WTC11 (cell line): ENCODE measurements at regions of chr2 and their contacts with region 1.

Region 1: DNA sequence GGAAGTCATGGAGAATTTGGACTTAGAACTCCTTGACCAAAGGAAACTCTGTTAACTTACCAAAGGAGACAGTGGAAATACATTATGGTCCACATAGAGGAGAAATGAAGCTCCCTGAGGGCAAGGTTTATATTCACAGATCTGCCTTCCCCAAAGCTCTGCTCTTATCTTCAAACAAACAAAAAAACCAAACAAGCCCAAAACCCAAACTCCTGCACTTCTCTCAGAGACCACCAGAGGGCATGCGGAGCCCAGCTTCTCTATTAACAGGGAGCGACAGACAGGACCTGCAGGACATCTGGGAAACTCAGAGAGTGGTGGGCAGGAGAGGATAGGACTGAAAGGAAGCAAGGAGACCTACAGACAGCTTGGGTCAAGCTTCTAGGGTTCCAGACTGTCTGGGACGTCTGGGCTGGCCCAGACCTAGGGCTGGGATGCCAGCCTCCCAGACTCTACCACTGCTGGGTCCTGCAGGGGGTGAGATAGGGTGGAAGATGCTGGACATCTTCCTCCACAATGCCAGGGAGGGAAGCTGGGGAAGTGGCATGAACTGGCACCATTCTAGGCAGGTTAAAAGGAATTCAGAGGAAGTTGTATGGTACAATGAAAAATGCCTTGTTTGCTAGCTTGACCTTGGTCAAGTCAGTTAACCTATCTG is 4.0 kb upstream of the WNT10A start:
- DNase-seq: peak; percentile 81
- ATAC-seq: peak; percentile 18
- H3K4me3 Mint-ChIP-seq: no peak overlapping the region
- H3K27ac Mint-ChIP-seq: no peak overlapping the region
- H3K4me1 Mint-ChIP-seq: peaks cover 33% of the 10 kb centered on the region
- H3K27me3 Mint-ChIP-seq: peaks cover 97% of the 10 kb centered on the region
- CTCF ChIP-seq: peak; percentile 88

Region 2: GRCh38 chr2:218476676-218477075 is 400.0 kb before region 1 on chr2:
- CTCF ChIA-PET with region 1: no interaction called
- POLR2A ChIA-PET with region 1: no interaction called
- DNase-seq: no peak
- ATAC-seq: no peak
- H3K4me3 Mint-ChIP-seq: no peak overlapping the region
- H3K27ac Mint-ChIP-seq: peak overlapping the region; percentile 49; the same call in 1 of the 2 replicates
- H3K4me1 Mint-ChIP-seq: no peaks in the 10 kb centered on the region
- H3K27me3 Mint-ChIP-seq: no peaks in the 10 kb centered on the region
- CTCF ChIP-seq: no peak

Region 3: DNA sequence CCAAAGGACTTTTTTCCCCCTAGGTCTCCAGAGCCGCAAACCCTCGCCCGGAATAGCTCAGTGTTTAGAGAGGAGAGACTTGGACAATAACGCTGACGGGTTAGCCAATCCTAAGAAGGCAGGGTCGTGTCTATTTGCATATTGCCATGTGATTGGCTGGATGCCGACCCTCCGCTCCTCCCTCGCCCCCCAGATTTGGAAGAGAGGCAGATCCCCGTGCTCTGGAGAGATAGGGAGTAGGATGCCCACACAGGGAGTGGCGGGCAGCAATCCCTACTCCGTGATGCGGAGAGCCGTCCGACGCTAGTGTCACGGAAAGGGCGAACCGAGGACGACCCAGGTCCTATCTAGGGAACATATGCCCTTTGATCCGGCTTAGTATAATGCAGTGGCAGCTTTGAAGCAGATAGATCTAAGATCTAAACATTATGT is 15.7 kb before region 1 on chr2:
- CTCF ChIA-PET with region 1: interaction called, 57 read pairs
- POLR2A ChIA-PET with region 1: no interaction called
- DNase-seq: peak; percentile 87
- ATAC-seq: peak; percentile 94
- H3K4me3 Mint-ChIP-seq: peak overlapping the region; percentile 69
- H3K27ac Mint-ChIP-seq: no peak overlapping the region
- H3K4me1 Mint-ChIP-seq: peaks cover 38% of the 10 kb centered on the region
- H3K27me3 Mint-ChIP-seq: peaks cover 93% of the 10 kb centered on the region
- CTCF ChIP-seq: no peak

Region 4: GRCh38 chr2:218908721-218909619 is 32.3 kb after region 1 on chr2:
- CTCF ChIA-PET with region 1: interaction called, 10 read pairs
- POLR2A ChIA-PET with region 1: no interaction called
- DNase-seq: peak; percentile 96
- ATAC-seq: peak; percentile 97
- H3K4me3 Mint-ChIP-seq: peak overlapping the region; percentile 75
- H3K27ac Mint-ChIP-seq: no peak overlapping the region
- H3K4me1 Mint-ChIP-seq: peaks cover 13% of the 10 kb centered on the region
- H3K27me3 Mint-ChIP-seq: peaks cover 63% of the 10 kb centered on the region
- CTCF ChIP-seq: no peak

Region 5: GRCh38 chr2:218959141-218959731 is 82.5 kb after region 1 on chr2 and contains the start of gene CDK5R2:
- CTCF ChIA-PET with region 1: interaction called, 11 read pairs
- POLR2A ChIA-PET with region 1: no interaction called
- DNase-seq: peak; percentile 96
- ATAC-seq: peak; percentile 82
- H3K4me3 Mint-ChIP-seq: peak within 1 kb of the TSS; percentile 84
- H3K27ac Mint-ChIP-seq: no peak within 1 kb of the TSS
- H3K4me1 Mint-ChIP-seq: peaks cover 27% of the 10 kb centered on the region
- H3K27me3 Mint-ChIP-seq: peaks cover 95% of the 10 kb centered on the region
- CTCF ChIP-seq: no peak
- total RNA-seq, gene CDK5R2: 0.16 to 0.46 TPM (median 0.26 TPM) in 3 replicates

Region 6: GRCh38 chr2:219002395-219003266 is 125.9 kb after region 1 on chr2:
- CTCF ChIA-PET with region 1: interaction called, 25 read pairs
- POLR2A ChIA-PET with region 1: no interaction called
- DNase-seq: peak; percentile 95
- ATAC-seq: peak; percentile 69
- H3K4me3 Mint-ChIP-seq: peak overlapping the region; percentile 83
- H3K27ac Mint-ChIP-seq: no peak overlapping the region
- H3K4me1 Mint-ChIP-seq: peaks cover 22% of the 10 kb centered on the region
- H3K27me3 Mint-ChIP-seq: peaks cover 100% of the 10 kb centered on the region
- CTCF ChIP-seq: peak; percentile 29; the same call in 1 of the 2 replicates

Region 7: GRCh38 chr2:219079417-219079816 is 202.7 kb after region 1 on chr2:
- CTCF ChIA-PET with region 1: no interaction called
- POLR2A ChIA-PET with region 1: no interaction called
- DNase-seq: no peak
- ATAC-seq: no peak
- H3K4me3 Mint-ChIP-seq: no peak overlapping the region
- H3K27ac Mint-ChIP-seq: no peak overlapping the region
- H3K4me1 Mint-ChIP-seq: 0 out of 2 replicates have a peak, but pooled peaks cover 6% of the 10 kb centered on the region
- H3K27me3 Mint-ChIP-seq: no peaks in the 10 kb centered on the region
- CTCF ChIP-seq: no peak